A673 (cell line): ENCODE measurements at regions of chr19 and their contacts with region 1.

Region 1: DNA sequence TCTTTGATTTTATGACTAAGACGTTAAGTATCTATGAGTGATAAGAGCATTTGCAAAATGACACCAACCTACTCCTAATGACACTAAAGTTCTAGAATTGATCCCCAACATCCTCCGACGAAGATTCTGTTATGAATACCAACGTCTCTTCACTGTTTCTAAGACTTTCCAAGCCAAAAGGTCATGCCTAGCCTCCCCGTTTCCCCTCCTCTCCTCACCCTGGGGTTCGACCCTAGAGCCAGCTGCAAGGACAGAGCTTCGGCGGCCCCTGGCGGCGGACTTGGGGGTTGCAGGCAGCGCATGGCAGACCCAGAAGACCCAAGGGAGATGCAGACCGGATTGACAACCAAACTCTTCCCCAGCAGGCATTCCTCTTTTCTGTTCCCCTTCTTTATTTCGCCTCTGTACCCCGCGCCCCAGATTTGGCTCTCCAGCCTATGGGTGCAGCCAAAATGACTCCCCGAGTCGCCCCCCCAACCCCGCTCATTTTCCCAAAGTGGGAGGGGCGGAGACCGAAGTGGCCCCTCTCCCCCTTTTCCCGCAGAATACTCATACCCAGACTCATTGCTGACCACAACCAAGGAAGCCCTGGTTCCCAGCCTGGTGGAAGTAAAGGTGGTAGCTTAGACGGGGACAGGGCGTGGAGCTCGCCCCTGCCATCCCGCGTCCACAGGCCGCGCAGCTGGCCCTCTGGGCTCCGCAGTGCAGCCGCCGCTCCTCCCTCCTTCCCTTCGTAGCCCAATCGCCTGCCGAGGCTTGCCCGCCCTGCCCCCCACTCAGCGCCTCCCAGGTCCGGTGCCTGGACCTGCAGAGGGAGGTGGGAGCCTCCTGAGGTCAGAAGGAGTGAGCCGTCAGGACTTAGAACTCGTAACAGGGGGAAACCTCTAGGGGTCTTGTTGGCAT is 4.1 kb upstream of the EML2 start:
- DNase-seq: peak; percentile 92
- H3K4me3 ChIP-seq: peak overlapping the region; percentile 9
- H3K27ac ChIP-seq: no peak overlapping the region
- H3K4me1 ChIP-seq: peaks cover 22% of the 10 kb centered on the region
- H3K27me3 ChIP-seq: no peaks in the 10 kb centered on the region
- CTCF ChIP-seq: peak; percentile 99

Region 2: DNA sequence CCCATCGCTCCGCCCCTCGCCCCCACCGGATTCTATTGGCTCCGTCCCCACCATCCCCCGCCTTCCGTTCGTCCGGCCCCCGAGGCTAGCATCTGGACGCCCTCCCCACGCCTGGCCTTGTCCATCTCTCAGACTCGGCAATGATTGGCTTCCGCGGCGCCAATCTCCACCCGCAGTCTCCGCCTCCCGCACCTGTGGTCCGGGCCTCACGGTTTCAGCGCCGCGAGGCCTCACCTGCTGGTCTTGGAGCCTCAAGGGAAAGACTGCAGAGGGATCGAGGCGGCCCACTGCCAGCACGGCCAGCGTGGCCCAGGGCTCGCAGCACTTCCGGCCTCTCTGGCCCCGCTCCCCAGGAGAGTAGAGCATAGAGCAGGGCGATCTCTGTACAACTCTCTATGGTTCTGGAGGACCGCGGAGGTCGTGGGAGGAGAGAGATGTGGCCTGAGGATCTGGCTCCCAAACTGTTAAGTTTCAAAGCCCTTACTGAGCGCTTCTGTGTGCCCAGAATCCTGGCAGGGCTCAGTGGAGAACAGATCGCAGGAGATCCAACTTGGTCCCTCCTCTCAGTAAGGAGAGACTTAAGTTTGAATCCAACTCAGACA is 219.6 kb before region 1 on chr19 and contains the start of gene ERCC1:
- CTCF ChIA-PET with region 1: no interaction called
- POLR2A ChIA-PET with region 1: no interaction called
- intact Hi-C with region 1: loop called (anchors 5 kb)
- DNase-seq: peak; percentile 97
- H3K4me3 ChIP-seq: peak within 1 kb of the TSS; percentile 63
- H3K27ac ChIP-seq: peak within 1 kb of the TSS; percentile 89
- H3K4me1 ChIP-seq: peaks cover 16% of the 10 kb centered on the region
- H3K27me3 ChIP-seq: no peaks in the 10 kb centered on the region
- CTCF ChIP-seq: no peak
- total RNA-seq, gene ERCC1: 158 and 165 TPM in 2 replicates

Region 3: GRCh38 chr19:45506246-45506990 is 136.9 kb before region 1 on chr19:
- CTCF ChIA-PET with region 1: no interaction called
- POLR2A ChIA-PET with region 1: no interaction called
- intact Hi-C with region 1: loop called (anchors 5 kb)
- DNase-seq: peak; percentile 95
- H3K4me3 ChIP-seq: peak overlapping the region; percentile 93
- H3K27ac ChIP-seq: peak overlapping the region; percentile 83
- H3K4me1 ChIP-seq: peaks cover 10% of the 10 kb centered on the region
- H3K27me3 ChIP-seq: no peaks in the 10 kb centered on the region
- CTCF ChIP-seq: peak; percentile 73

Region 4: GRCh38 chr19:45528651-45529419 is 114.4 kb before region 1 on chr19:
- CTCF ChIA-PET with region 1: interaction called, 15 read pairs
- POLR2A ChIA-PET with region 1: no interaction called
- intact Hi-C with region 1: no loop called
- DNase-seq: peak; percentile 75
- H3K4me3 ChIP-seq: peak overlapping the region; percentile 52
- H3K27ac ChIP-seq: no peak overlapping the region
- H3K4me1 ChIP-seq: peaks cover 7% of the 10 kb centered on the region
- H3K27me3 ChIP-seq: no peaks in the 10 kb centered on the region
- CTCF ChIP-seq: peak; percentile 31

Region 5: DNA sequence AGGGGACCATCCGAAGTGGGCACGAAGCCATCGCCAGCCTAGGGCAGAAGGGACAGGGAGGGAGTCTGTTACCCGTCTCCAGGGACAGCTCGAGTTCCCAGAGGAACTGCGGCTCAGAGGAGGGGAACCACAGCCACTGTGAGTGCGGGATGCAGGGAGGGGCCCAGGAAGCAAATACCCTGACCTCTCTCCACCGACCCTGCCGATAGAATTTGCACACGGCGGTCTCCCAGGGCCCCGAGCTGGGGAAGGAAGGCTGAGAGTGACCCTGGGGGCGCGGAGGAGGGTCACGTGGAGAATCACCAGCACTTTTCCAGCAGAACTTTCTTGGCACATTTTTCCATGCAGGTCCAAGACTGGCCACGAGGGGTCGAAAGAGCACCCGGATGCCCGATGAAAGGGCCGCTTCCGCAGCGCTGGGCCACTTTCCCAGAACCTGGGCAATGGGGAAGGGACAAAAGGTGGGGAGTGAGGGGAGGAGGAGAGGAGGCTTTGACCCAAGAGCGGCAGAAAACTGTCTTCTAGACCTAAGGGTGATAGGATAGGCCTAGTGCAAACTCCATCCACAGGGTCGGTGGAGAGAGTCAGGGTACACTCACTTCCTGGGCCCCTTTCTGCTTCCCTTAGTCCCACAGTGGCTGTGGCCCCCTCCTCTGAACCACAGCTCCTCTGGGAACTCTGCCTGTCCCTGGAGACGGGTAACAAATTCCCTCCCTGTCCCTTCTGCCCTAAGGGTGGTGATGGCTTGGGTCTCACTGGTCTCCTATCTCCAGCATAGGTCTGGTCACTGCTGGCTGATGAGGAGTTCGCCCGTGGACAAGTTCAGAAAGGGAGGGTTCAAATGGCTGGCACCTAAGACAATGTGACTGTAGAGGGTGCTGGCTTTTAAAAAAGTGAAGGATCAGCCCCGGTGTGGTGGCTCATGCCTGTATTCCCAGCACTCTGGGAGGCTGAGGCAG is 35.9 kb before region 1 on chr19:
- CTCF ChIA-PET with region 1: interaction called, 4 read pairs
- POLR2A ChIA-PET with region 1: no interaction called
- intact Hi-C with region 1: loop called (anchors 5 kb)
- DNase-seq: peak; percentile 81
- H3K4me3 ChIP-seq: peak overlapping the region; percentile 23
- H3K27ac ChIP-seq: peak overlapping the region; percentile 35
- H3K4me1 ChIP-seq: peaks cover 10% of the 10 kb centered on the region
- H3K27me3 ChIP-seq: peaks cover 7% of the 10 kb centered on the region
- CTCF ChIP-seq: peak; percentile 90

Region 6: GRCh38 chr19:45705115-45705514 is 61.8 kb after region 1 on chr19:
- CTCF ChIA-PET with region 1: no interaction called
- POLR2A ChIA-PET with region 1: no interaction called
- intact Hi-C with region 1: no loop called
- DNase-seq: no peak
- H3K4me3 ChIP-seq: no peak overlapping the region
- H3K27ac ChIP-seq: no peak overlapping the region
- H3K4me1 ChIP-seq: no peaks in the 10 kb centered on the region
- H3K27me3 ChIP-seq: no peaks in the 10 kb centered on the region
- CTCF ChIP-seq: no peak